Natural killer cell (primary cell): ENCODE measurements at regions of chr2 and their contacts with region 1.

Region 1: DNA sequence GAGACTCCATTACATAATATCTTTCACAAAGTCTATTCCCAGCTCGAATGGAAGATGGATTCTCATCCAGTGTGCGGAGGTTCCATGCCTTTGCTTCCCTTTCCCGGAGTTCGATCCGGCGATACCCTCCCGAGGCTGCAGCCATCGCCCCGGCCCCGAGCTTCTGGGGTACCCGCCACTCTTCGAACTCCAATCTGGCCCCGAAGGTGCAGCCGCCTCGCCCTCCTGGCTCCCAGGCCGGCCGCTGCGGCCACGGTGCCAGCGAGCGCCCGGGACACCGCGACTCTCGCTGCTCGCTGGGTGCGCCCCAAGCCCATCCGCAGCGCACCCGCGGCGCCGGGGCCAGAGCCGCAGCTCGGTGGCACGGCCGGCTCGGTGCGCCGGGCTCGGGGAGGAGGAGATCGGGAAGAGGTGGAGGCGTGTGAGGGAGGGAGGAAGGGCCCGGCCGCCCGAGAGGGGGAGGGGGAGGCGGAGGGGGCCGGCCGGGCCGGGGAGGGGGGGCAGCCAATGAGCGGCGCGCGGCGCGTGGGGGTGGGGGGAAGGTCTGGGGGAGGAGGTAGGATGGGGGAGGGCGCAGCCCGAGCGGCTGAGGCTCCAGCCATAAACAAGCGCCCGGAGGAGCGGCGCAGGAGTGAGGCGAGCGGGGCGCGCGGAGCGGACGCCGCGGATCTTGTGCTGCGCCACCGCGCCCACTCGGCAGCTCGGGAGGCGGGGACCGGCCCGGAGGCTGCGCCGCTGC is at the start of gene CRIM1:
- DNase-seq: peak; percentile 42 to 67
- ATAC-seq: peak; percentile 61 to 71 (median 63)
- H3K4me3 ChIP-seq: peak within 1 kb of the TSS; percentile 57
- H3K4me3 Mint-ChIP-seq: peak within 1 kb of the TSS; percentile 93
- H3K27ac ChIP-seq: no peak within 1 kb of the TSS
- H3K27ac Mint-ChIP-seq: peak within 1 kb of the TSS in 1 of 2 donors; percentile 85
- H3K4me1 ChIP-seq: peaks cover 22% of the 10 kb centered on the region
- H3K4me1 Mint-ChIP-seq: peaks cover 37 to 43% of the 10 kb centered on the region in 2 donors
- H3K27me3 ChIP-seq: no peaks in the 10 kb centered on the region
- H3K27me3 Mint-ChIP-seq: peaks cover 0 to 7% of the 10 kb centered on the region in 2 donors
- CTCF ChIP-seq: no peak
- total RNA-seq, gene CRIM1: 19.3 to 34.1 (median 32.9) TPM

Region 2: DNA sequence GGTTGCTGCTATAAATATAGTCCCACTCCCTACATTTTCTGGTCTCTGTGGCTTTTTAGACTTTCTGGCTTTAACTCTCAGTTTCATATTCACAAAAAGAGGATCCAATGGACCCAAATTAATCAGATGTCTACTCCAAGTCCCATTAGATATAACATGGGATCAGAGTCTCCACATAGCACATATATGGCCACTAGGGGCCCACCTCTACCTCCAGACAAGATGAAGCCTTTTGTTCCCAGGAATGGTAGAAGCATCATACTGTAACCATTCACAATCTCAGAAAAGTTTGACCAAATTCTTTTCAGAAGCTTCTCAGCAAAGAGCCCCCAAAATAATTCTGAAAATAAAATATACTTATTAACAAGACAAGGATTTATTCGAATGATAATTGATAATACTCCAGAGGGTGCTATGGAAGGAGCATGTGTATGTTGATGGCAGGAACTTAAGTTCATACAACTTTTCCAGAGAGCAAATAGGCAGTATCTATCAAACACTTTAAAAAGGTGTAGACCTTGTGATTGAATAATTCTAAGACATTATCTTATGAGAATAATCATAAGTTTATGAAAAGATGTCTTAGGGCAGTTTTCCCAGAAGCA is 382.1 kb before region 1 on chr2:
- intact Hi-C with region 1: loop called (anchors 5 kb)
- DNase-seq: peak in 1 of 2 donors; percentile 54
- ATAC-seq: peak in 2 of 3 donors; percentile 64 to 71
- H3K4me3 ChIP-seq: no peak overlapping the region
- H3K4me3 Mint-ChIP-seq: no peak overlapping the region
- H3K27ac ChIP-seq: no peak overlapping the region
- H3K27ac Mint-ChIP-seq: no peak overlapping the region
- H3K4me1 ChIP-seq: no peaks in the 10 kb centered on the region
- H3K4me1 Mint-ChIP-seq: peaks cover 0 to 5% of the 10 kb centered on the region in 2 donors
- H3K27me3 ChIP-seq: no peaks in the 10 kb centered on the region
- H3K27me3 Mint-ChIP-seq: peaks cover 15 to 23% of the 10 kb centered on the region in 2 donors
- CTCF ChIP-seq: peak; percentile 61

Region 3: DNA sequence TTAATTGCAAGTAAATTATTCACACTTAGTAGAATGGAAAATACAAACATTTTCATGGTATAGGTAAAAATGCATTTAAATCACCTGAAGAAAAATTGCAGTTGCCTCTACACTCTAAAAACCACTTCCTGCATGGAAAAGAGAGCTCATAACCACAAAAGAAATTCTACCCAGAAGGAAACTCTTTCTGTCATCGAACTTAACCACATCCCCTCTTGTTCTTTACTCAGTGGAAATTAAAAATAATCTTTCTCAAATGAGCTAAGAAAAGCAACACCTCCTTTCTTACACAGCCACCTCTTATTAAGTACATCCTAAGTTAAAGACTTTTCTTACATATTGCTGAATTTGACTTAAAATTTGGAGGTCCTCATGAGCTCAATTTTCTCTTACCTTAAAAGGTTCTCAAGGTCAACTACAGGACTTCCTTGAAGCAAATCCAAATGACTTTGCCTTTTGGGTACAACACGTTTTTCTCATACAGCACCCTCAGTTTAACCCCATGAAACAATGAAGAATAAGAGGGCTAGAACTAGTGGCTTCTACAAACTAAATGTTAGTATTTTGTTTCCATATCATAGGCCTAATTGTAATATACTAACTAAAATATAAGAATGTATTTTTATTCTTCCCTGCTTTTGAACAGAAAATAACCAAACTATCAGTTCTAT is 108.9 kb before region 1 on chr2:
- intact Hi-C with region 1: loop called (anchors 5 kb)
- DNase-seq: peak in 1 of 2 donors; percentile 70
- ATAC-seq: peak; percentile 60 to 83 (median 75)
- H3K4me3 ChIP-seq: no peak overlapping the region
- H3K4me3 Mint-ChIP-seq: peak overlapping the region; percentile 83
- H3K27ac ChIP-seq: peak overlapping the region; percentile 28
- H3K27ac Mint-ChIP-seq: peak overlapping the region; percentile 85 to 90
- H3K4me1 ChIP-seq: peaks cover 35% of the 10 kb centered on the region
- H3K4me1 Mint-ChIP-seq: peaks cover 74 to 76% of the 10 kb centered on the region in 2 donors
- H3K27me3 ChIP-seq: no peaks in the 10 kb centered on the region
- H3K27me3 Mint-ChIP-seq: no peaks in the 10 kb centered on the region
- CTCF ChIP-seq: no peak

Region 4: DNA sequence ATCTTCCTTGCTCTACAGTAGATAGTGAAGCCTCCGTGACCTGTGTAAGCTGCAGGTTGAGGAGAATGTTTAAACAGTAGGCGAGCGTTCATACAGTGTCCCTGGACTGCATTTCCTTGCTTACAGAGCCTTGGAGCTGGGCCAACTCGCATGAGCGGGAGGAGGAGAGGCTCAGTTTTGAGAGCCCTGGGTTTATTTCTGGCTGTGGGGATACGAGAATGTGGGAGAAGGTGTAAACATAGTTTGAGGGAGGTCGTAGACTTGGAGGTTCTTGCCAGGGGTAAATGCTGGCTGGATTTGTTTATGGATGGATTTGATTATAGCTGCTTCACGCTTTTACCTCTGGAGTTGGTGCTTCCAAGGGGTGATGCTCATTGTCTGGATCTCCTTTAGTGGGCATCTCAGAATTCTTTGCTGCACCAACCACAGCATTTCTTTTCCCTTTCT is 21.0 kb after region 1 on chr2:
- intact Hi-C with region 1: no loop called
- DNase-seq: no peak
- ATAC-seq: no peak
- H3K4me3 ChIP-seq: no peak overlapping the region
- H3K4me3 Mint-ChIP-seq: no peak overlapping the region
- H3K27ac ChIP-seq: no peak overlapping the region
- H3K27ac Mint-ChIP-seq: peak overlapping the region in 1 of 2 donors; percentile 47
- H3K4me1 ChIP-seq: no peaks in the 10 kb centered on the region
- H3K4me1 Mint-ChIP-seq: peaks cover 52 to 55% of the 10 kb centered on the region in 2 donors
- H3K27me3 ChIP-seq: no peaks in the 10 kb centered on the region
- H3K27me3 Mint-ChIP-seq: no peaks in the 10 kb centered on the region
- CTCF ChIP-seq: no peak

Region 5: DNA sequence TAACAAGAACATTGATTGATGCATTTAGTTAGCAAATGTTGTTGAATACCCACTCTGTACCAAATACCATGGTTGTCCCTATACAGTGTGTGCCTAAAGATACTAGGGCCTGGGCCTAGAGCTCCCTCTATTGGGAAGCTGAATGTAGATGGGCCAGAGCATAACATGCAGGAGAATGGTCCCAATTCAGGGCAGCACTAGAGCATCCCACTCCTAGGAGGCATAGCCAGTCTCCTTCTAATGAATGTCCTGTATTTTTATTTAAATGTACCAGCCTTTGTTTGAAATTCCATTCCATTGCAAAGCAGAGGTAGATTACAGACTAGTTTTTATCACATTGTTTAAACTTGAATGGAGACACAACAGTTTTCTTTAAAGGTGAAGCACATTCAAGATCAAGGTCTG is 152.1 kb after region 1 on chr2:
- intact Hi-C with region 1: loop called (anchors 10 kb)
- DNase-seq: peak in 1 of 2 donors; percentile 49
- ATAC-seq: peak; percentile 57 to 80 (median 65)
- H3K4me3 ChIP-seq: no peak overlapping the region
- H3K4me3 Mint-ChIP-seq: no peak overlapping the region
- H3K27ac ChIP-seq: no peak overlapping the region
- H3K27ac Mint-ChIP-seq: no peak overlapping the region
- H3K4me1 ChIP-seq: no peaks in the 10 kb centered on the region
- H3K4me1 Mint-ChIP-seq: no peaks in the 10 kb centered on the region
- H3K27me3 ChIP-seq: no peaks in the 10 kb centered on the region
- H3K27me3 Mint-ChIP-seq: no peaks in the 10 kb centered on the region
- CTCF ChIP-seq: peak; percentile 48

Region 6: GRCh38 chr2:36785179-36785795 is 430.0 kb after region 1 on chr2:
- intact Hi-C with region 1: loop called (anchors 5 kb)
- DNase-seq: peak; percentile 72 to 81
- ATAC-seq: peak; percentile 78 to 93 (median 90)
- H3K4me3 ChIP-seq: no peak overlapping the region
- H3K4me3 Mint-ChIP-seq: no peak overlapping the region
- H3K27ac ChIP-seq: no peak overlapping the region
- H3K27ac Mint-ChIP-seq: peak overlapping the region in 1 of 2 donors; percentile 31
- H3K4me1 ChIP-seq: peaks cover 17% of the 10 kb centered on the region
- H3K4me1 Mint-ChIP-seq: peaks cover 41 to 45% of the 10 kb centered on the region in 2 donors
- H3K27me3 ChIP-seq: no peaks in the 10 kb centered on the region
- H3K27me3 Mint-ChIP-seq: no peaks in the 10 kb centered on the region
- CTCF ChIP-seq: peak; percentile 94